ENCODE measurements at regions of chr7 and their contacts with region 1.

Region 1: GRCh38 chr7:106176414-106177299 is 64.5 kb upstream of the SYPL1 start:
- DNase-seq: peak; percentile 85 to 88
- ATAC-seq: peak; percentile 89 to 96 (median 94)
- H3K4me3 ChIP-seq: no peak overlapping the region
- H3K27ac ChIP-seq: peak overlapping the region; percentile 78
- H3K4me1 ChIP-seq: peaks cover 28% of the 10 kb centered on the region
- H3K27me3 ChIP-seq: no peaks in the 10 kb centered on the region
- CTCF ChIP-seq: peak; percentile 94

Region 2: GRCh38 chr7:105975770-105976422 is 200.8 kb before region 1 on chr7:
- intact Hi-C with region 1: no loop called
- DNase-seq: no peak
- ATAC-seq: no peak
- H3K4me3 ChIP-seq: no peak overlapping the region
- H3K27ac ChIP-seq: no peak overlapping the region
- H3K4me1 ChIP-seq: no peaks in the 10 kb centered on the region
- H3K27me3 ChIP-seq: no peaks in the 10 kb centered on the region
- CTCF ChIP-seq: no peak

Region 3: DNA sequence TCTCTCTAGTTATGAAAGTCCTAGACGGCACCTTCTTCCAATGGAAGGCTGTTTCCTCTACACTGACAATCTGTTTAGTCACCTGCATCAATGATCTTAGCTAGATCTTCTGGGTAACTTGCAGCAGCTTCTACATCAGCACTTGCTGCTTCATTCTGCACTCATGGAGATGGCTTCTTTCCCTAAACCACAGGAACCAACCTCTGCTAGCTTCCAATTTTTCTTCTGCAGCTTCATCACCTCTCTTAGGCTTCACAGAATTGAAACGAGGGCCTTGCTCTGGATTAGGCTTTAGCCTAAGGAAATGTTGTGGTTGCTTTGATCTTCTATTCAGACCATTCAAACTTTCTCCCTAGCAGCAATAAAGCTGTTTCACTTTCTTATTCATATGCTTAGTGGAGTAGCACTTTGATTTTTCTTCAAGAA is 83.5 kb after region 1 on chr7:
- intact Hi-C with region 1: no loop called
- DNase-seq: no peak
- ATAC-seq: peak in 2 of 4 donors; percentile 9 to 24
- H3K4me3 ChIP-seq: no peak overlapping the region
- H3K27ac ChIP-seq: no peak overlapping the region
- H3K4me1 ChIP-seq: no peaks in the 10 kb centered on the region
- H3K27me3 ChIP-seq: no peaks in the 10 kb centered on the region
- CTCF ChIP-seq: no peak

Region 4: GRCh38 chr7:106461993-106462859 is 285.6 kb after region 1 on chr7:
- intact Hi-C with region 1: loop called (anchors 1 to 2 kb)
- DNase-seq: no peak
- ATAC-seq: peak in 3 of 4 donors; percentile 43 to 75 (median 49)
- H3K4me3 ChIP-seq: no peak overlapping the region
- H3K27ac ChIP-seq: no peak overlapping the region
- H3K4me1 ChIP-seq: peaks cover 9% of the 10 kb centered on the region
- H3K27me3 ChIP-seq: no peaks in the 10 kb centered on the region
- CTCF ChIP-seq: peak; percentile 67

Region 5: DNA sequence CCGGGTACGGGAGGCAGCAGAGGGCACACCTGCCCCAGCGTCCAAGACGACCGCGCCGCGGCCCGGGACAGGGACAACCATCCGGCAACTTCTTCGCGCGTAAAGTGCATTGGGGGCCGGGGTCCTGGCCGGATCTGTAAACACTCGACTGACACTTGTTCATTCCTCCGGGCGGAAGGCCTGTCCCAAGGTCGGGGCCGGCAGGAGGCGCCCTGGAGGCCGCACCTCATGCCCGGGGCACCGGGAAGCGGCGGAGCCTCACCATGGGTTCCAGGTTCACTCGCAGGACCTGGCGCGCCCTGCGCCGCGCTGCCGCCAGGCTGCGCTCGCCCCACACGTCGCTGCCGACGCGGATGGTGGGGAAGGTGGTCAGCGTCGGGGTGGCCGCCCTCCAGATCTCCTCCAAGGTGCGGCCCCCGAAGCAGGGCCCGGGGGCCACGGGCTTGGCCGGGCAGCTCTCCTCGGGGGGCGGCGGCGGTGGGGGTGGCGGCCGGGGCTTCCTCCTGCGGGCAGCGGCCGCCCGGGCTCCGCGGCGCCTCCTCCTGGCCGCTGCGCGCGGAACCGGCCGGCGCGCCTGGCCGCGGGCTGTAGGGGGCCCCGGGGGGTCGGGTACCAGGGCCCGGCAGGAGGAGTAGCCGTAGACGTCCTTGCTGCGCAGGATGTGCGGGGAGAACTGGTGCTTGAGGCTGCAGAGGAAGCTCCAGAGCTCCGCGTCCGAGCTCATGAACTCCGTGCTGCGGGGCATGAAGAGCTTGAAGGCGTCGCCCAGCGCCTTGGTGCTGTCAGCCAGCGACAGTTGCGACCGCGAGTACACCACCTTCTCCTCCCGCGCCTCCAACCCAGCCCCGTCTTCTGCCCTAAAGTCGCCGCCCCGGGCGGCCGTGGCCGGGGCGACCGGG is 483.6 kb after region 1 on chr7:
- intact Hi-C with region 1: loop called in 1 of 2 experiments (anchors 10 kb)
- DNase-seq: peak; percentile 78 to 88
- ATAC-seq: peak; percentile 67 to 75 (median 72)
- H3K4me3 ChIP-seq: peak overlapping the region; percentile 87
- H3K27ac ChIP-seq: peak overlapping the region; percentile 82
- H3K4me1 ChIP-seq: peaks cover 2% of the 10 kb centered on the region
- H3K27me3 ChIP-seq: no peaks in the 10 kb centered on the region
- CTCF ChIP-seq: peak; percentile 67

Region 6: DNA sequence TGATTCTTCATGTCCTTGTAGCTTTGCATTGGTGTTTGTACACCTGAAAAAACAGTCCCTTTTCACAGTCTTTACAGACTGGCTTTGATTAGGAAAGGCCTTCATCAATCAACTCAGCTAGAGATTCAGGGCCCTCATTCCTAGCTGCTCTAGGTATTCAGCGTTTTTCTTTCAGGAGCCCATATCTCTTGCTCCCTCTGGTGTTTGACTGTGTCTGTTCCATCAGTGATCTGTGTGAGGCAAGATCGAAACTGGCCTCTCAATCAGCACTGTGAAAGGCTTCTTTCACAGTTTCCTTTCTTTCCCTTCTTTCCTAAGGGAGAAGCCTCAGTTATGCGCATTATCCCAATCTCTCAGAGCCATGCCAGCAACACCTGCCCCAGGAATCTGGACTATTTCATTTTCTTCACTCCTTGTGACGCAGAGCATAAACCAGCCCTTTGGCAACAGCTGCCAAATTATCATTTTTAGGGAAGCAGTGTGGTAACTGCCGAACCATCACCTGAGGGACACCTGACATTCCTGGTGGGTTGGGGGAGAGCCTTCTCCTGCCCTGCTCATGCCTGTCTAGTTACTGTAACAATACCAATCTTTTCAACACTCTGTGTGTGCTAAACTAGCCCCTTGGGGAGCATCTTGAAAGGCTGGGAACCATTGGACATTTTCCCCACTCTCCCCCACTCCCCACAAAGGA is 560.0 kb after region 1 on chr7:
- intact Hi-C with region 1: loop called in 1 of 2 experiments (anchors 10 kb)
- DNase-seq: no peak
- ATAC-seq: peak in 3 of 4 donors; percentile 37 to 65 (median 56)
- H3K4me3 ChIP-seq: no peak overlapping the region
- H3K27ac ChIP-seq: no peak overlapping the region
- H3K4me1 ChIP-seq: no peaks in the 10 kb centered on the region
- H3K27me3 ChIP-seq: no peaks in the 10 kb centered on the region
- CTCF ChIP-seq: peak; percentile 49